ENCODE measurements at regions of chr20 and their contacts with region 1.

Region 1: DNA sequence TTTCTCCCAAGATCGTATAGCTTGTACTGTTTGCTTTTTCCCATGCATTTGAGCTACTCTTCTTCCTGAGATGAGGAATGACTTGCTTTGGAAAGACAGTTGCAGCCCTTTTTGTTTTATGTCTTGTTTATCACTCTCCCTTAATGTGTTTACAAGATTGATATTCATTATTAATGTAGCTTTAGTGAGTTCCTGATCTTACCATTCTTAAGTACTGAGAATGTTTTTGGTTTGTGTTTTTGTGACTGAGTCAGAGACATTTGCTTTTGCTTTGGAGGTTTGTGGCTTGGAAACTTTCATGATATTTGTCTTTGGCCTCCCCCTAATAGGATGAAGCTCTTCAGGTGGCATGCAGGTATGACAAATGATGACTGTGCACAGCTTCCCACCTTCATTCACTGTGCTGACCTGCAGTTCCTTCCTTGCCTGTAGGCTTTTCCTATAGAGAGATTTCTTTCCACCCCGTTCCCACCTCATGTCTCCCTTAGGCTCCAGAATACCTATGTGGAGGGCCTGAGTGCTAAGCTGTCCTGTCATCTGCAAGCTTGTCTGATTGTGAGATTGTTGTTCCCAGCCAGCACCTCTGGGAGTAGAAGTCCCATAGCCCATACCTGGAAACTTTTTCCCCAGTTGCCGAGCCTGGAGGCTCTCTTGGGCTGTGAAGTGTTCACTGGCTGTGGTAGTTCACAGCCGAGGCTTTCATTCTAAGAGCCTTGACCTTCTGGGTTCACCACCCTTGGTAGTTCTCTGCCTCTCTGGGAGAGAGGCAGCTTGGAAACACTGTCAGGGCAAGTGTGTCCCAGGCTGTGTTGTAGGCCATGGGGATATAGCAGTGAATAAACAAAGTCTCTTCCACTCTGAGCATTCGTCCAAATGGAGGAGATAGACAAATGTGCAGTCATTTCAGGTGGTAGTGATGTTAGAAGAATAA is 27.1 kb downstream of the CDS2 start:
- DNase-seq: peak; percentile 27
- ATAC-seq: peak; percentile 80
- H3K4me3 Mint-ChIP-seq: no peak overlapping the region
- H3K27ac Mint-ChIP-seq: peak overlapping the region; percentile 10
- H3K4me1 Mint-ChIP-seq: peaks cover 60% of the 10 kb centered on the region
- H3K27me3 Mint-ChIP-seq: no peaks in the 10 kb centered on the region

Region 2: GRCh38 chr20:5065879-5066383 is 87.9 kb before region 1 on chr20:
- CTCF ChIA-PET with region 1: no interaction called
- POLR2A ChIA-PET with region 1: no interaction called
- intact Hi-C with region 1: no loop called
- DNase-seq: peak; percentile 22
- ATAC-seq: peak; percentile 53
- H3K4me3 Mint-ChIP-seq: no peak overlapping the region
- H3K27ac Mint-ChIP-seq: no peak overlapping the region
- H3K4me1 Mint-ChIP-seq: no peaks in the 10 kb centered on the region
- H3K27me3 Mint-ChIP-seq: no peaks in the 10 kb centered on the region

Region 3: DNA sequence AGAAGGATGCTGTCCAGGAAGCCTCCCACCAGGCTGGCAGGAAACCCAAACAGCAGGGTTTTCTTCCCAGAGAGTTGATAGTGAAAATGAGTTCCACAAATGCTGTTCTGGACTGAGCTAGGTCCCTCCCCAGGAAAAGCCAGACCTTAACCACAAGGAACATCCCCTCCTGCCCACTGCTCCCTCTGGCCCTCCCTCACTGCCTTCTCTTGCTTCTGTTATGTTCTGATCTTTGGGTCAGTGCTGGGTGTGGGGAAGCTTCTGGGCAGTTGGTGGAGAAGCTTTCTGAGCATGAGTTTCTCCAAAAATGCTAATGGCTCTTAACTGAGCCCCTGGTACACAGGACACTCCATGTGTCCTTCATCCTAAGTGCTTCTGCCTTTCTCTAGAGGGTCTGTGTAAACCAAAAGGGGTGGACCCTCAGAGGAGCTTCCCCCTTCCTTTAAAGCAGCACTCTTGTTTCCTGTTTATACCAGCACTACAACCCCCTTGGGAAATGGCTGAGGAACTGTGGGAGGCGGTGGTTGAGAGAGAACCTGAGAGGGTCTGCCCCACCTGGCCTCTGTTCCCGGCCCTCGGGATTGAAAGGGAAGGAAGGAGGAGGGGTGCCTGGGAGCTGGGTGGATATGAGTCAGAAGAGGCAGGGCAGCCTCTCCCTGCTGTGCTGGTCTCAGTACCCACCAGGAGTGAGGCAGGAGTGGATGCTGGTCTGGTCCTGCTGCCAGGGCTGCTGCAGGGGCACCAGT is 14.9 kb after region 1 on chr20:
- CTCF ChIA-PET with region 1: interaction called, 10 read pairs
- POLR2A ChIA-PET with region 1: no interaction called
- intact Hi-C with region 1: no loop called
- DNase-seq: no peak
- ATAC-seq: peak; percentile 51
- H3K4me3 Mint-ChIP-seq: no peak overlapping the region
- H3K27ac Mint-ChIP-seq: peak overlapping the region; percentile 59
- H3K4me1 Mint-ChIP-seq: peaks cover 68% of the 10 kb centered on the region
- H3K27me3 Mint-ChIP-seq: no peaks in the 10 kb centered on the region